ENCODE measurements at regions of chr16 and their contacts with region 1.

Region 1: DNA sequence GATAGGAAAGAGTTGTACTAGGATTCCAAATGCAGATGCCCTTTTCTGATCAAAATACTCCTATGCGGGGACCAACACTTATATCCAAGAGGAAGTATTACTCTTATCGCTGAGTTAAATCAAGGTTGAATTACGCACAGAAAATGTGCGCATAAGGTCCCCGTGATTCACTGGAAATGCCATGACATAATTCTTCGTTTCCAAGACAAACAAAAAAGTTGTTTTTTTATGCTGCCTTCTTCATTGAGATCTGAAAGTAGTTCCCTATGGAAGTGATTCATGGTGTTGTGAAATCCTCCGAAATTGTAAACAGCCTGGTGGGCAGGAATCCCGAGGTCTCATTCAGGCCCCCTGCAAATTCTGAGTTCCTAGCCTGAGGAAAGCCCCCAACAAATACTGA is 463.8 kb upstream of the HSBP1 start:
- DNase-seq: no peak
- ATAC-seq: no peak
- H3K4me3 ChIP-seq: no peak overlapping the region
- H3K27ac ChIP-seq: no peak overlapping the region
- H3K4me1 ChIP-seq: no peaks in the 10 kb centered on the region
- H3K27me3 ChIP-seq: no peaks in the 10 kb centered on the region
- CTCF ChIP-seq: no peak

Region 2: GRCh38 chr16:83285921-83286320 is 58.1 kb before region 1 on chr16:
- intact Hi-C with region 1: loop called in 1 of 10 experiments (anchors 10 kb)
- DNase-seq: no peak
- ATAC-seq: no peak
- H3K4me3 ChIP-seq: no peak overlapping the region
- H3K27ac ChIP-seq: no peak overlapping the region
- H3K4me1 ChIP-seq: no peaks in the 10 kb centered on the region
- H3K27me3 ChIP-seq: no peaks in the 10 kb centered on the region
- CTCF ChIP-seq: no peak

Region 3: DNA sequence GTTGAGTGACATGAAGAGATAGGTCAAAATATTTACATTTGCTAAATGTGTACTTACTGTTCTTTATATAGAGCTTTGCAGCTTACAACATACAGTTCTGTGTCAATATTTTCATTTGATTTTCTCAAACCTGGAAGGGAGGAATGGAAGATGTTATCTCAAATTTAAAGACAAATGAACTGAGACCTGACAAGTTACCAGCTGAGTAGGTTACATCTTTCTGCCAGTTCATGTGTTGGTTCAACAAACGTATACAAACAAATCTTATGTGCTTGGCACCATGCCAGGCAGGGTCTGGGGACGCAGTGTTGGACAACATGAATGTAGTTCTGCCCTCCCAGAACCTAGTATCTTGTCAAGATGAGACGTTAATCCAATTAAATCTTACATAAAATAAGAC is 43.7 kb before region 1 on chr16:
- intact Hi-C with region 1: no loop called
- DNase-seq: no peak
- ATAC-seq: no peak
- H3K4me3 ChIP-seq: no peak overlapping the region
- H3K27ac ChIP-seq: no peak overlapping the region
- H3K4me1 ChIP-seq: peaks cover 0 to 11% (median 0%) of the 10 kb centered on the region in 9 donors
- H3K27me3 ChIP-seq: no peaks in the 10 kb centered on the region
- CTCF ChIP-seq: no peak

Measured in heart right ventricle (tissue), 16 donors.